ENCODE measurements at regions of chr19 and their contacts with region 1.

Region 1: GRCh38 chr19:35162471-35163326 is 8.2 kb downstream of the FXYD5 start:
- DNase-seq: peak; percentile 95
- H3K4me3 ChIP-seq: no peak overlapping the region
- H3K27ac ChIP-seq: peak overlapping the region; percentile 68
- H3K4me1 ChIP-seq: peaks cover 41% of the 10 kb centered on the region
- H3K27me3 ChIP-seq: no peaks in the 10 kb centered on the region
- CTCF ChIP-seq: no peak

Region 2: DNA sequence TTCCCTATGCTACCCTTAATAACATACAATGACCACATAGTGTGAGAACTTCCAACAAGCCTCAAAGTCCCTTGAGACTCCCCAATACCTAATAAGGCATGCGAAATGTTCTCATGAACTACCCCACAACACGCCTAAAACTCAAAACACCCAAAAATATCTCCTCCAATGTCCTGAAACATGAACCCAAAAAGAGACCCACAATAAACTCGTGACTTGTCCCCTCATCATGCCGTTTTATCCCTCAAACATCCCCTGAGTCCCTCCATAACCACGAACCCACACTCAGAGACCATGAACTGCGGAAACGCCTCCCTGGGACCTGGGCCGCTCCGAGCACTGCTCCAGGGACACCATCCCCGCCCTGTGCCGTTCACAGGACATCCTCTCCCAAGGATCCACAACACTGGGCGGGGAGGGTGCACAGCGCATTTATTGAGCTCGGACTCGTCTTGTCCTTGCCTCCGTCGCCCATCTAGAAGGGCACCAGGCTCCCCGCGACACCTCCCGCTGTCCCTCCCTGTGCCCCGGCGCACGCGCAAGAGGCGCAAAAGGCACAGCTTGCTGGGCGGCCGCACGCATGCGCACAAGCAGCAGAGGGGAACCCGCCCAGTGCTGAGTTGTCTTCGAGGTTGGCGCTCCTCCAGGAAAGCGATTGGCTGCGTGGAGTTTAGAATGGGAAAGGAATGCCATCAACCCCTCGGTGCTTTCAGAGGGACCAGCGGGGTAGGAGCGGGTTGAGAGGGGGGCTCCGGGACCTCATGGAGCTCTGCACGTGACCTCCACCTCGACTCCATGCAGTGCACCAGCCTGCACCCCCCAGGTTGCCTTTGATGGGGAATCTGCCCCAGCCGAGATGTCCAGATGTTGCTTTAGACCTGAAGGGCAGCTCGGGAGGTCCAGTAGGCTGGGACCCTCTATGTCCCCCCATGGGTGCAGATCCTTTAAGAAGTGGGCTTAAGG is 38.3 kb before region 1 on chr19:
- CTCF ChIA-PET with region 1: no interaction called
- dilution Hi-C with region 1: no loop called
- in situ Hi-C with region 1: no loop called
- intact Hi-C with region 1: no loop called
- DNase-seq: peak; percentile 89
- H3K4me3 ChIP-seq: no peak overlapping the region
- H3K27ac ChIP-seq: peak overlapping the region; percentile 74
- H3K4me1 ChIP-seq: peaks cover 74% of the 10 kb centered on the region
- H3K27me3 ChIP-seq: no peaks in the 10 kb centered on the region
- CTCF ChIP-seq: no peak

Region 3: DNA sequence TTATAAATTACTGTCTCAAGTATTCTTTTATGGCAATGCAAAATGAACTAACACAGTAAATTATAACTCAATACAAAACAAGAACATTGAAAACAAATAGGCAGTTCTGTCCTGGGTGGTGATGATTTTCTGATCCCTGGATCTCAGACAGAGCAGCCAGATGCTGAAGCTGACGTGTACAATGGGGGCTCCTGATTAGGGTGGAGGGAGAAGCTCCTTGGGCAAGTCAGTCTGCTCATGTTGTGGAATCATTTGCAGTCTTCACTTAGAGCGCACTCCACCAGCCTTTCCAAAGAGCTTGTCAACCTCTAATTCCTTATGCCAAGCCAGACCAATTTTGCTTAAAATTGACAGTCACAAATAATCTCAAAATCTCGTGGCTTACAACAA is 13.5 kb after region 1 on chr19:
- CTCF ChIA-PET with region 1: no interaction called
- dilution Hi-C with region 1: no loop called
- in situ Hi-C with region 1: no loop called
- intact Hi-C with region 1: loop called (anchors 1 kb)
- DNase-seq: no peak
- H3K4me3 ChIP-seq: no peak overlapping the region
- H3K27ac ChIP-seq: no peak overlapping the region
- H3K4me1 ChIP-seq: peaks cover 8% of the 10 kb centered on the region
- H3K27me3 ChIP-seq: no peaks in the 10 kb centered on the region
- CTCF ChIP-seq: no peak

Region 4: DNA sequence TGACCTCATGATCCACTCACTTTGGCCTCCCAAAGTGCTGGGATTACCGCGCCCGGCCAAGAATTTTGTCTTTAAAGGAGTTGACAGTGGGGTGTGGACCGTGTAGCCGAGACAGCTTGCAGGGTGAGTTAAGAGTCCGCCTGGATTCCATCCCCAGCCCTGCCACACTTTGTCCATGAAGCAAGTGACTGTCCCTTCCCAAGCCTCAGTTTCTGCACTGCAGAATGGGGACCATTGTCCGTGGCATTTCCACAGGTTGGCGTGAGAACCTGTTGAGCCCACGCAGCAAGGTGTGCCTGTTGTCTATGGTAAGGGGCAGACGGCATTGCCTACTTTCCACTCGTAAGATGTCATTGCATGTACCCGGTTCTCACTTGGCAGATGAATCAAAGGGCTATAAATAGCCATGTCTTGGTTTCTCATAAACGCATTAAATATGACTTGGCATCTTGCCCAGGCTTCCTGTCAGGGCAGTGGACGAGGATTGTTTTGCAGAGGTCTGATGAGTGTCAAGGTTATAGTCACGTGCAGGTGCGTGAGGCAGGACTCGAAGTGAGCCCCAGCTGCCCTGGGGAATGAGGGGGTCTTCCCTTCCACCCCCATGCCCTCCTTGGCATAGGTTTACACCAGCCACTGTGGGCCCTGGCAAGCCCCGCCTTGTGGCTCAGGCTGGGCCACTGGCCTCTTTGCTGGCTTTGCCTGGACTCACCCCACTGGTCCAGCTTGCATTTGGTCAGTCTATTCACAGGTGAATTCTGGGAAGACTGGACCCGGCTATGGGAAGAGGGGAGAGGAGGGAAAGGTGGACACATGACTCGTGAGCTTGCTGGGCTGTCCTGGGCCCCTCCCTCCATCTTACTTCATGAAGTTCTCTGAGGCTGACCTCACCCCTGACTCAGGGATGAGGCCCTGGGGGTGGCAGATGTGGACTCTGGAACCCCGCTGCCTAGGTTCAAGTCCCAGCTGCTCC is 51.2 kb after region 1 on chr19:
- CTCF ChIA-PET with region 1: no interaction called
- dilution Hi-C with region 1: no loop called
- in situ Hi-C with region 1: no loop called
- intact Hi-C with region 1: loop called (anchors 5 kb)
- DNase-seq: peak; percentile 94
- H3K4me3 ChIP-seq: no peak overlapping the region
- H3K27ac ChIP-seq: no peak overlapping the region
- H3K4me1 ChIP-seq: peaks cover 11% of the 10 kb centered on the region
- H3K27me3 ChIP-seq: no peaks in the 10 kb centered on the region
- CTCF ChIP-seq: no peak